ENCODE measurements at regions of chr5 and their contacts with region 1.

Region 1: GRCh38 chr5:163564321-163564938 is 59.0 kb downstream of the MAT2B start:
- DNase-seq: no peak
- ATAC-seq: no peak

Region 2: GRCh38 chr5:163512516-163512915 is 51.9 kb before region 1 on chr5:
- intact Hi-C with region 1: no loop called
- DNase-seq: no peak
- ATAC-seq: no peak

Region 3: GRCh38 chr5:164504141-164504772 is 939.8 kb after region 1 on chr5:
- intact Hi-C with region 1: loop called (anchors 2 kb)
- DNase-seq: no peak
- ATAC-seq: no peak

Region 4: DNA sequence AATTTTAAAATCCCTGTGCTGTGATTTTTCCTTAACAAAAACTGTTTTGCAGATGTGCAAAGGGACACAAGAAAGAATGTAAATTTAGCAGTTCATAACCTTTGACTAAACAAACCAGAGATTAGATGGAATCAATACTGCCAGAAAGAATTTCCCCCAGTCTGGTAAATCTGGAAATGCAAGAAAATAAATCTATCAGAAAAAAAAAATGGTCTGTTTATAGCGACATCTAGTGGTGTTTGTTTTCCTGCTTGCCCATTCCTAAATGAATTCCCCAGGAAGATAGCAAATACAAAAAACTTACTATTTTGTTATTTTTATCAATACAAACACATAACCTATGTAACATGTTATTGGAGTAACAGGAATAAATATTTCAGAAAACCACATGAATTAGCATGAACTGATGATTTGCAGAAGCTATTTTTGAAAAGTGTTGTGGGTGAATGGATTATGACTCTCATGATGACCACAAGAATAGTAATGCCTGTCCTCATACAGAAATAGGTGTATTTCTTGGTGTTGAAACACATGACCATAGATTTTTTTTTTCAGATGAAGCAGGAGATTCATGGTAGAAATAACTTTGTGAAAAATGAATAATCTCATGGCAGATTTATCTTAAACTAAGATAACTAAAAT is 1644.8 kb after region 1 on chr5:
- intact Hi-C with region 1: loop called (anchors 10 kb)
- DNase-seq: no peak
- ATAC-seq: no peak